ENCODE measurements at regions of chr11 and their contacts with region 1.

Region 1: GRCh38 chr11:57345555-57346211 is 7.5 kb downstream of the P2RX3 start:
- DNase-seq: peak; percentile 52 to 87 (median 64)
- ATAC-seq: peak; percentile 93
- H3K4me3 ChIP-seq: no peak overlapping the region
- H3K4me3 Mint-ChIP-seq: no peak overlapping the region
- H3K27ac ChIP-seq: no peak overlapping the region
- H3K27ac Mint-ChIP-seq: no peak overlapping the region
- H3K4me1 ChIP-seq: peaks cover 12% of the 10 kb centered on the region
- H3K4me1 Mint-ChIP-seq: peaks cover 4% of the 10 kb centered on the region
- H3K27me3 ChIP-seq: peaks cover 0 to 3% of the 10 kb centered on the region in 2 experiments
- H3K27me3 Mint-ChIP-seq: no peaks in the 10 kb centered on the region
- CTCF ChIP-seq: peak; percentile 73

Region 2: DNA sequence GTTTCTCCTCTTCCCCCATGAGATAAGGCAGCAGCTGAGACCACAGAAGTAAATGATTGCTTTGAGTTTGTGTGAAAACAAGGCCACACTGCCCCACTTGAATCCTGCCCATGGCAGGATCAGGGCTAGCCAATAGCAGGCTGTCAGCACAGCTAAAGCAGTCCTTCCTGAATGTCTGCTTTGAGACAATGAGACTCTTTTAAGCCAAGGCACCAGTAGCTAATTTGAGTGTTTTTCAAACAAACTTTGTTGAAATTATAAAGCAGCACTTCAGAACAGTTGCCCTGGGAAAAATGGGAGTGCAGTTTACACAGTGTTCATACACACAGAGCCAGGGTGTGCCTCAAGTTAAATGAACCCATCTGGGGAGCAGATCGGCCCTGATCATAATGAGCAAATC is 460.5 kb before region 1 on chr11:
- CTCF ChIA-PET with region 1: no interaction called
- POLR2A ChIA-PET with region 1: no interaction called
- intact Hi-C with region 1: no loop called
- DNase-seq: no peak
- ATAC-seq: no peak
- H3K4me3 ChIP-seq: no peak overlapping the region
- H3K4me3 Mint-ChIP-seq: no peak overlapping the region
- H3K27ac ChIP-seq: no peak overlapping the region
- H3K27ac Mint-ChIP-seq: no peak overlapping the region
- H3K4me1 ChIP-seq: no peaks in the 10 kb centered on the region
- H3K4me1 Mint-ChIP-seq: no peaks in the 10 kb centered on the region
- H3K27me3 ChIP-seq: no peaks in the 10 kb centered on the region
- H3K27me3 Mint-ChIP-seq: no peaks in the 10 kb centered on the region
- CTCF ChIP-seq: no peak

Region 3: DNA sequence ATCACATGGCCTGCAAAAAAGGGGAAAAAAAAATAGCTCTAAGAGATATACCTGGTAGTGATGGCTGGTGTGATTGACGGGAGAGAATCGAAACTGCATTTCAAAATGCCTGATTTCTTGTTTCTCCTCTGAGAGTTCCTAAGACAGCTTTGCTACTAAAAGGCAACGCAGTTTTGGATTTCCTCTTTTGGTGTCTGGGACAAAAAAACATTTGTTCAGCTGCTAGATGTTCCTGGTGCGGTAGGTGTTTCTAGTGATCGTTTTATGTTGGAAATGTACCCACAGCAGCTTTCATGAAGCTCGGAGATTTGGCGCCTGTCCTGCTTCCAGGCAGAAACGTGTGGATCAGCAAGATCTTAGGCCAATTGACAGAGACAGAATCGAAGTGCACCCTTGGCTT is 10.6 kb after region 1 on chr11:
- CTCF ChIA-PET with region 1: no interaction called
- POLR2A ChIA-PET with region 1: no interaction called
- intact Hi-C with region 1: no loop called
- DNase-seq: no peak
- ATAC-seq: no peak
- H3K4me3 ChIP-seq: no peak overlapping the region
- H3K4me3 Mint-ChIP-seq: no peak overlapping the region
- H3K27ac ChIP-seq: no peak overlapping the region
- H3K27ac Mint-ChIP-seq: no peak overlapping the region
- H3K4me1 ChIP-seq: no peaks in the 10 kb centered on the region
- H3K4me1 Mint-ChIP-seq: no peaks in the 10 kb centered on the region
- H3K27me3 ChIP-seq: no peaks in the 10 kb centered on the region
- H3K27me3 Mint-ChIP-seq: peaks cover 23% of the 10 kb centered on the region
- CTCF ChIP-seq: no peak

Region 4: GRCh38 chr11:57370251-57370650 is 24.6 kb after region 1 on chr11:
- CTCF ChIA-PET with region 1: no interaction called
- POLR2A ChIA-PET with region 1: no interaction called
- intact Hi-C with region 1: no loop called
- DNase-seq: no peak
- ATAC-seq: no peak
- H3K4me3 ChIP-seq: no peak overlapping the region
- H3K4me3 Mint-ChIP-seq: no peak overlapping the region
- H3K27ac ChIP-seq: no peak overlapping the region
- H3K27ac Mint-ChIP-seq: no peak overlapping the region
- H3K4me1 ChIP-seq: no peaks in the 10 kb centered on the region
- H3K4me1 Mint-ChIP-seq: no peaks in the 10 kb centered on the region
- H3K27me3 ChIP-seq: no peaks in the 10 kb centered on the region
- H3K27me3 Mint-ChIP-seq: peaks cover 4% of the 10 kb centered on the region
- CTCF ChIP-seq: no peak

Region 5: GRCh38 chr11:57426929-57427726 is 81.4 kb after region 1 on chr11 and contains the start of gene SLC43A3:
- CTCF ChIA-PET with region 1: interaction called, 6 read pairs
- POLR2A ChIA-PET with region 1: no interaction called
- intact Hi-C with region 1: loop called in 1 of 2 experiments (anchors 5 kb)
- DNase-seq: peak; percentile 17 to 79 (median 56)
- ATAC-seq: peak; percentile 21
- H3K4me3 ChIP-seq: peak within 1 kb of the TSS; percentile 61
- H3K4me3 Mint-ChIP-seq: peak within 1 kb of the TSS; percentile 87
- H3K27ac ChIP-seq: peak within 1 kb of the TSS; percentile 32 to 58
- H3K27ac Mint-ChIP-seq: peak within 1 kb of the TSS; percentile 87
- H3K4me1 ChIP-seq: peaks cover 39% of the 10 kb centered on the region
- H3K4me1 Mint-ChIP-seq: peaks cover 55% of the 10 kb centered on the region
- H3K27me3 ChIP-seq: no peaks in the 10 kb centered on the region
- H3K27me3 Mint-ChIP-seq: no peaks in the 10 kb centered on the region
- CTCF ChIP-seq: no peak
- total RNA-seq, gene SLC43A3: 6.9 to 7.3 TPM

Region 6: GRCh38 chr11:57480409-57481137 is 134.9 kb after region 1 on chr11:
- CTCF ChIA-PET with region 1: no interaction called
- POLR2A ChIA-PET with region 1: no interaction called
- intact Hi-C with region 1: loop called (anchors 2 kb)
- DNase-seq: peak; percentile 45 to 74 (median 58)
- ATAC-seq: peak; percentile 55
- H3K4me3 ChIP-seq: no peak overlapping the region
- H3K4me3 Mint-ChIP-seq: no peak overlapping the region
- H3K27ac ChIP-seq: no peak overlapping the region
- H3K27ac Mint-ChIP-seq: no peak overlapping the region
- H3K4me1 ChIP-seq: peaks cover 27% of the 10 kb centered on the region
- H3K4me1 Mint-ChIP-seq: peaks cover 18% of the 10 kb centered on the region
- H3K27me3 ChIP-seq: peaks cover 20% of the 10 kb centered on the region in 2 experiments
- H3K27me3 Mint-ChIP-seq: peaks cover 16% of the 10 kb centered on the region
- CTCF ChIP-seq: peak; percentile 56

Region 7: DNA sequence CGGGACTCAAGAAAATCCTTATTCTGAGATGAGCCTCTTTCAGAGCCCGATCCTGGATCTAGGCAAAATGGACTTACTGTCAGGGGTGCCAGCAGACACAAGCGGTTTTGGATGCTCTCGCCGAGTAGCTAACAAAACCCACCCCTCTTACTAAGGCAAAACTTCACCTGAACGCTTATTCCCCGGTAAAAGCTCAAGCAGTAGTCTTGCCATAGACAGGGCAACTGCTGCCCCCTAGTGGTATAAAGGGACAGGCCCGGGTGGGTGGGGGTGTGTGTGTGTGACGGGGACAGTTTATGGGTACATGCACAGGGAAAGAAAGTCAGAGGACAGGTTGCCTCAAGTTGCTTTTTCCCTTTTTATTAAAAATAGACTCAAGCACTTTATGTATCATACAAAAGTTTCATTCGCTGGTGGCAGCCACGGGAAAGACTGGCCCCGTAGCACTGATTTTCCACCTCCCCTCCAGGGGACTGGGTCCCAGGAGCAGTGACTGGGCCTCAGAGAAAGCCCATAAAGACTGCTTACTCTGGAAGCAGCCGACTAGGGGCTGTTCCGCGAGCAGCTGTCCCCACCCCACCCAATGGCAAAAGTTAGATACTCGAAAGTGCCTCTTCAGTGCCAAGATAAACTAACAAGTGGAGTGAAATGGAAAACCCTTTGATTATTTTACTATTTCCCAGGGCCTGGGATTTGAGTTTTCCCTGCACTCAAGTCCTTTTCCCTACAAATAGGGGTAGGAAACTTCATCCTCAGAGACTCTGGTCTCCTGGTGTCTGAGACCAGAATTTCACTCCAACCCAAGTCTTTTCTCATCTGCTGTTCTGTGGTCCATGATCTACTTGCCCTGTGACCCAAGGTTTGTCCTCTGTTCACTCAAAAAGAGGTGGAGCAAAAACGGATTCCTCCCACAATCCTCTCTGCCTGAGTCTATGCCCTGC is 299.3 kb after region 1 on chr11:
- CTCF ChIA-PET with region 1: interaction called, 4 read pairs
- POLR2A ChIA-PET with region 1: no interaction called
- intact Hi-C with region 1: loop called (anchors 1 kb)
- DNase-seq: peak; percentile 73 to 90 (median 86)
- ATAC-seq: peak; percentile 68
- H3K4me3 ChIP-seq: no peak overlapping the region
- H3K4me3 Mint-ChIP-seq: no peak overlapping the region
- H3K27ac ChIP-seq: no peak overlapping the region
- H3K27ac Mint-ChIP-seq: no peak overlapping the region
- H3K4me1 ChIP-seq: peaks cover 42% of the 10 kb centered on the region
- H3K4me1 Mint-ChIP-seq: peaks cover 50% of the 10 kb centered on the region
- H3K27me3 ChIP-seq: peaks cover 48 to 50% of the 10 kb centered on the region in 2 experiments
- H3K27me3 Mint-ChIP-seq: peaks cover 64% of the 10 kb centered on the region
- CTCF ChIP-seq: peak; percentile 71

Region 8: GRCh38 chr11:58675334-58676155 is 1329.9 kb after region 1 on chr11:
- CTCF ChIA-PET with region 1: no interaction called
- POLR2A ChIA-PET with region 1: no interaction called
- intact Hi-C with region 1: loop called in 1 of 2 experiments (anchors 2 kb)
- DNase-seq: peak; percentile 55 to 82 (median 70)
- ATAC-seq: peak; percentile 76
- H3K4me3 ChIP-seq: no peak overlapping the region
- H3K4me3 Mint-ChIP-seq: no peak overlapping the region
- H3K27ac ChIP-seq: no peak overlapping the region
- H3K27ac Mint-ChIP-seq: no peak overlapping the region
- H3K4me1 ChIP-seq: peaks cover 4% of the 10 kb centered on the region
- H3K4me1 Mint-ChIP-seq: no peaks in the 10 kb centered on the region
- H3K27me3 ChIP-seq: peaks cover 8 to 13% of the 10 kb centered on the region in 2 experiments
- H3K27me3 Mint-ChIP-seq: no peaks in the 10 kb centered on the region
- CTCF ChIP-seq: peak; percentile 93